ENCODE measurements at regions of chr12 and their contacts with region 1.

Region 1: DNA sequence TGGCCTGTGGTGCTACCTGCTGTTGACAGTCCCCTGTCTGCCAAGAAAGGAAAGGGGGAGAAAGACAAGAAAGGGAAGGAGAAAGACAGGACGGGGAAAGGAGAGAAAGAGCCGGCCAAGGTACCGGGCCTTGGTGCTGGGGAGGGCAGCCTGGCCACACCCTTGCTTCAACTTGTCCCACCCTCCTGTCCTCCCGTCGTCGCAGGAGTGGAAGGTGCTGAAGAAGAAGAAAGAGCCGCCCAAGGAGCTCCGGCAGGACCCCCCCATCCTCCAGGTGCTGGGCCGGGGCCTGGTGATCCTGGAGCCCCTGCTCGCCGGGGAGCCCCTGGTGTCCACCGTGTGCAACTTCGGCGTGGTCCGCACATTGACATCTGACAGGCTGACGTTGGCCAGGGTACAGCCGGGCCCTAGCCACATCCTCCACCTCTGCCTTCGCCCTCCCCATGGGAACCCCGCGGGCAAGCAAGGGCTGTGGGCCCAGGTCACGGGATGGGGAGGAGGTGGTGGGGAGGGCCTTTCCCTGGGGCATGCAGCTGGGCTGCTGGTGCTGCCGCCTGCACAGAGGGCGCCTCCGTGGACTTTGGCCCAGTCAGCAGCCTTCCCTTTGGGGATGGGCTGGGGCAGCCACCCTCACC is 2.9 kb upstream of the B3GNT4 start:
- DNase-seq: no peak
- ATAC-seq: no peak
- H3K4me3 ChIP-seq: no peak overlapping the region
- H3K27ac ChIP-seq: no peak overlapping the region
- H3K4me1 ChIP-seq: peaks cover 8% of the 10 kb centered on the region; the same call in 1 of the 2 replicates
- H3K27me3 ChIP-seq: no peaks in the 10 kb centered on the region
- CTCF ChIP-seq: no peak; the same call in 1 of the 2 replicates

Region 2: GRCh38 chr12:121964813-121965643 is 235.6 kb before region 1 on chr12:
- CTCF ChIA-PET with region 1: interaction called, 16 read pairs
- POLR2A ChIA-PET with region 1: no interaction called
- in situ Hi-C with region 1: no loop called
- intact Hi-C with region 1: no loop called
- DNase-seq: no peak
- ATAC-seq: no peak
- H3K4me3 ChIP-seq: no peak overlapping the region
- H3K27ac ChIP-seq: no peak overlapping the region
- H3K4me1 ChIP-seq: no peaks in the 10 kb centered on the region
- H3K27me3 ChIP-seq: no peaks in the 10 kb centered on the region
- CTCF ChIP-seq: no peak

Region 3: DNA sequence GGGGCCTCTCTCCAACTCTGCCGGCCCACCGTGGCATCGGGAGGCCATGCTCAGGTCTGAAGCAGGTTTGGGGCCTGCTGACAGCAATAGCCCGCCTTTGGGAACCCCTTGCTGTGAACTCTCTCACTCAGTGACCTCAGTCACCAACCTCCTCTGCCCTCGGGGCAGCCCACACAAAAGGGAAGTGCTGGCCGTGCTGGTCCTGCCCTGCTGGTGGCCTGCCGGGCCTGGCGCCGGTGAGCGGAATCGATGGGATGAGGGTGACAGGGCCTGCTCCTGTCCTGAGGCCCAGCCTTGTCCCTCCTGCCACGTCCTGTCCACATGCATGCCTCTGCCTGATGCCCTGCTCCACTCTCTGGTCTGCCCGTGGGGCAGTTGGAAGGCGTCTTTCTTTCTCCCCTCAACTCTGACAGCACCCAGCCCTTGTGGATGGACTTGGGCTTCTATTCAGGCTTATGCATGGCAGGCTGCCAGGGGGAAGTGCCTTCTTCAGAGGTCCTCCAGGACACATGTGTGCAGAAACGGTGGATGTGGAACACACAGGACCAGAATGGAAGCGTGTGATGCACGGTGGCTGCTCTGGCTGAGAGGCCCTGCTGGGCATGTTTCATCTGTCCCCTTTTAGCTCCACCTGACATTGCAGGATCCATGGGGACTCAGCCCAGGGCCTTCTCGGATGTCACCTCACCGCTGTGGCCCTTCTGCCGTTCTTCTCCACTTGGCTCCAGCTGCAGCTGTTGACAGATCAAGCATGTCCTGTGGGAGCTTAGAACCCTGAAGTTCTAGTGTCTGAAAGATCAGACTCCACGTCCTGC is 58.5 kb before region 1 on chr12:
- CTCF ChIA-PET with region 1: interaction called, 11 read pairs
- POLR2A ChIA-PET with region 1: no interaction called
- in situ Hi-C with region 1: no loop called
- intact Hi-C with region 1: no loop called
- DNase-seq: no peak
- ATAC-seq: no peak
- H3K4me3 ChIP-seq: no peak overlapping the region
- H3K27ac ChIP-seq: no peak overlapping the region
- H3K4me1 ChIP-seq: no peaks in the 10 kb centered on the region
- H3K27me3 ChIP-seq: no peaks in the 10 kb centered on the region
- CTCF ChIP-seq: no peak

Measured in Panc1 (cell line).